T-cell (primary cell): ENCODE measurements at regions of chr13 and their contacts with region 1.

Region 1: GRCh38 chr13:102724923-102725322 is 30.1 kb upstream of the METTL21C start:
- DNase-seq: peak in 1 of 35 experiments; percentile 40
- ATAC-seq: no peak
- H3K4me3 ChIP-seq: no peak overlapping the region
- H3K4me3 Mint-ChIP-seq: no peak overlapping the region
- H3K27ac ChIP-seq: no peak overlapping the region
- H3K27ac Mint-ChIP-seq: no peak overlapping the region
- H3K4me1 ChIP-seq: no peaks in the 10 kb centered on the region
- H3K4me1 Mint-ChIP-seq: peaks cover 0 to 7% (median 3%) of the 10 kb centered on the region in 3 donors
- H3K27me3 ChIP-seq: no peaks in the 10 kb centered on the region
- H3K27me3 Mint-ChIP-seq: peaks cover 5 to 6% of the 10 kb centered on the region in 2 donors

Region 2: DNA sequence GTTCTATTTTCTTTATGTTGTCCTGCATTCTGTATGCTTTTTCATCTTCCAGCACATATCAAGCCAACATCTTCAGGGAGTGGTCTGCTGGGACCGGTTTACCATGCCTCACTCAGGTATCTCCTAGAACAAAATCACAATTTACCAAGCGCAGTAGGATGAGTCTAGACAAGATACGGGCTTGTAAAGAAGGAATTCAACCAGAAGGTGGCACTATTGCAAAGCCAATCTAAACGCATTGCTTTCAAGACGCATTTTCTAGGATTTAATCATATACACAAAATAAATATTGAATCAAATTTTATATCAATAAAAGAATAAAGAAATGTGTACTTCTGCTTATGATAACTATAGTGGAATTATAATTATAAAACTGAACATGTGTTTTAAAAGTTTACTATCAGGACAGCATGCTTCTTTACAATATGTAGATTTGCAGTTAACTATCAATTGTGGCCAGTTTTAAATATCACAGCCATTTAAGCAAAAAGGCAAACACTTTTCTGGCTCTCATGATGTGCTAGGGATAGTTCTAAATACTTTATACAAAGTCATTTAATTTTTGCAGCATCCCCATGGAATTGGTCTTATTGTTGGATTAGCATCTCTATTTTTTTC is 144.3 kb before region 1 on chr13:
- CTCF ChIA-PET with region 1: interaction called in 1 of 2 experiments, 12 read pairs
- POLR2A ChIA-PET with region 1: no interaction called
- DNase-seq: peak in 16 of 35 experiments; percentile 9 to 83 (median 28)
- ATAC-seq: peak; percentile 60 to 81 (median 71)
- H3K4me3 ChIP-seq: no peak overlapping the region
- H3K4me3 Mint-ChIP-seq: no peak overlapping the region
- H3K27ac ChIP-seq: no peak overlapping the region
- H3K27ac Mint-ChIP-seq: no peak overlapping the region
- H3K4me1 ChIP-seq: peaks cover 0 to 5% of the 10 kb centered on the region in 2 experiments
- H3K4me1 Mint-ChIP-seq: peaks cover 11 to 15% (median 15%) of the 10 kb centered on the region in 3 donors
- H3K27me3 ChIP-seq: peaks cover 0 to 12% of the 10 kb centered on the region in 2 experiments
- H3K27me3 Mint-ChIP-seq: peaks cover 5 to 7% of the 10 kb centered on the region in 2 donors

Region 3: DNA sequence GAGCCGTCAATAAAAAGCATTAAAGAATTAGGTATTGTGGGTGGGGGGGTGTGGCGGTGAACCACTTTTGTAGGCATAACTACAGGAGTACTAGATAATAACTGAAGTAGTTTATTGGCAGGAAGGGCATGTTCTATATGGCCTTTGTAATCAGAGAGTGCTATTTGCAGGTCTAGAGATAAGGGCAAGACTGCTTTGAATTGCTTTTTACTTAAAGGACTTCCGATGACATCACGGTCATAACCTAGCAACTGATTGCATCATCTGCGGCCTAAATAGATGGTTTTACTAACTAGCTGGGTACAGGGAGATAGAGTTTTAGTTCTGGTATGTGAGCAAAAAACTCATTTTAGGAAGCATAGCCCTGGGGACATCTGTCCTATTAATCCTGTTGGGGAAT is 54.8 kb before region 1 on chr13:
- CTCF ChIA-PET with region 1: no interaction called
- POLR2A ChIA-PET with region 1: no interaction called
- DNase-seq: no peak
- ATAC-seq: no peak
- H3K4me3 ChIP-seq: no peak overlapping the region
- H3K4me3 Mint-ChIP-seq: no peak overlapping the region
- H3K27ac ChIP-seq: no peak overlapping the region
- H3K27ac Mint-ChIP-seq: peak overlapping the region in 1 of 2 donors; percentile 58
- H3K4me1 ChIP-seq: no peaks in the 10 kb centered on the region
- H3K4me1 Mint-ChIP-seq: no peaks in the 10 kb centered on the region
- H3K27me3 ChIP-seq: no peaks in the 10 kb centered on the region
- H3K27me3 Mint-ChIP-seq: no peaks in the 10 kb centered on the region

Region 4: DNA sequence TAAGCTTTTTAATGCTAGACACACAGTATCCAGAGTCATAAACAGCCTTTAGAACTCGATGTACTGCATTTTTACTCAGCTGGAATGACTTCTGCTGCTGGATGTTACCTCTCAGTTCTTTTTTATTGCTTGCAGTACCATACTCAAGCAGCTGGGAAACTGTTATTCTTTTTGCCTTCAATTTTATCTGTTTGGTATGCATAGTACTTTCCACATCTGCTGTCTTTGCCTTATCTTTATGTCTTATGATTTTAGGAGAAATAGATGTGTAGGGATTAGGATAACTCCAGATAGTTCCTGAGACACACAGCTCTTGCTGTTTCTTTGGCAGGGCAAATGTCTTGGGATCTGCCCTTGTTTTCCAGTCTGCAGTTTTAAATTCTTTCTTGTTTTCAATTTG is 17.2 kb after region 1 on chr13:
- CTCF ChIA-PET with region 1: no interaction called
- POLR2A ChIA-PET with region 1: no interaction called
- DNase-seq: no peak
- ATAC-seq: no peak
- H3K4me3 ChIP-seq: no peak overlapping the region
- H3K4me3 Mint-ChIP-seq: no peak overlapping the region
- H3K27ac ChIP-seq: no peak overlapping the region
- H3K27ac Mint-ChIP-seq: no peak overlapping the region
- H3K4me1 ChIP-seq: no peaks in the 10 kb centered on the region
- H3K4me1 Mint-ChIP-seq: no peaks in the 10 kb centered on the region
- H3K27me3 ChIP-seq: no peaks in the 10 kb centered on the region
- H3K27me3 Mint-ChIP-seq: peaks cover 33 to 52% of the 10 kb centered on the region in 2 donors